Activated CD4-positive, alpha-beta T cell treated with anti-CD3 and anti-CD28 coated beads for 36 hours (primary cell): ENCODE measurements at regions of chr6 and their contacts with region 1.

Region 1: GRCh38 chr6:617445-618100 is 39.3 kb downstream of the HUS1B start:
- DNase-seq: peak; percentile 30
- ATAC-seq: peak; percentile 30
- H3K4me3 Mint-ChIP-seq: no peak overlapping the region
- H3K27ac Mint-ChIP-seq: no peak overlapping the region
- H3K4me1 Mint-ChIP-seq: no peaks in the 10 kb centered on the region
- H3K27me3 Mint-ChIP-seq: no peaks in the 10 kb centered on the region

Region 2: GRCh38 chr6:579339-579738 is 38.2 kb before region 1 on chr6:
- CTCF ChIA-PET with region 1: no interaction called
- POLR2A ChIA-PET with region 1: no interaction called
- intact Hi-C with region 1: no loop called
- DNase-seq: no peak
- ATAC-seq: no peak
- H3K4me3 Mint-ChIP-seq: no peak overlapping the region
- H3K27ac Mint-ChIP-seq: no peak overlapping the region
- H3K4me1 Mint-ChIP-seq: peaks cover 18% of the 10 kb centered on the region
- H3K27me3 Mint-ChIP-seq: no peaks in the 10 kb centered on the region

Region 3: GRCh38 chr6:701700-702479 is 84.3 kb after region 1 on chr6:
- CTCF ChIA-PET with region 1: no interaction called
- POLR2A ChIA-PET with region 1: no interaction called
- intact Hi-C with region 1: loop called in 1 of 2 experiments (anchors 5 kb)
- DNase-seq: no peak
- ATAC-seq: no peak
- H3K4me3 Mint-ChIP-seq: no peak overlapping the region
- H3K27ac Mint-ChIP-seq: no peak overlapping the region
- H3K4me1 Mint-ChIP-seq: peaks cover 2% of the 10 kb centered on the region
- H3K27me3 Mint-ChIP-seq: peaks cover 8% of the 10 kb centered on the region

Region 4: DNA sequence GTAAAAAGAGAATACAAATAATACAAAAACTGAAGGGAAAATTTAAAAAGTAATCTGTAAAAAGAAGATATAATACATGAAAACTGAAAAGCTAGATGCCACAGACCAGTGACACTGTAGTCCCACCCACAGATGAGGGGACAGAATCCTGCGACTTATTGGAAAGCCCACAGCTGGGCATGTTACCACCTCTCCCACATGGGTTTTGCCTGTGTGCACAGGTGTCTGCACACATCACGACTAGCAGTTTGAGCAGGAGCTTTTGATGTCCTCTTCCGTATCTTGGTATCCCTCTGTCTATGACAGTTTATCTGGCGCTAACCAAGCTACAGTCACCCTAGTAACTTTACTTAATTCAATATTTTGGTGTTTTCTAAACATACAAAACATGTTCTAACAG is 366.5 kb after region 1 on chr6:
- CTCF ChIA-PET with region 1: no interaction called
- POLR2A ChIA-PET with region 1: no interaction called
- intact Hi-C with region 1: no loop called
- DNase-seq: no peak
- ATAC-seq: no peak
- H3K4me3 Mint-ChIP-seq: no peak overlapping the region
- H3K27ac Mint-ChIP-seq: no peak overlapping the region
- H3K4me1 Mint-ChIP-seq: no peaks in the 10 kb centered on the region
- H3K27me3 Mint-ChIP-seq: peaks cover 32% of the 10 kb centered on the region